Activated B cell treated with CpG ODN at 0.5 μM for 24 hours (primary cell): ENCODE measurements at regions of chr11 and their contacts with region 1.

Region 1: GRCh38 chr11:67630228-67630942 is 648 bp upstream of the NUDT8 start:
- DNase-seq: peak; percentile 92
- ATAC-seq: peak; percentile 78
- H3K4me3 Mint-ChIP-seq: peak overlapping the region; percentile 87
- H3K27ac Mint-ChIP-seq: peak overlapping the region; percentile 88
- H3K4me1 Mint-ChIP-seq: peaks cover 13% of the 10 kb centered on the region
- H3K27me3 Mint-ChIP-seq: no peaks in the 10 kb centered on the region
- CTCF ChIP-seq: no peak

Region 2: DNA sequence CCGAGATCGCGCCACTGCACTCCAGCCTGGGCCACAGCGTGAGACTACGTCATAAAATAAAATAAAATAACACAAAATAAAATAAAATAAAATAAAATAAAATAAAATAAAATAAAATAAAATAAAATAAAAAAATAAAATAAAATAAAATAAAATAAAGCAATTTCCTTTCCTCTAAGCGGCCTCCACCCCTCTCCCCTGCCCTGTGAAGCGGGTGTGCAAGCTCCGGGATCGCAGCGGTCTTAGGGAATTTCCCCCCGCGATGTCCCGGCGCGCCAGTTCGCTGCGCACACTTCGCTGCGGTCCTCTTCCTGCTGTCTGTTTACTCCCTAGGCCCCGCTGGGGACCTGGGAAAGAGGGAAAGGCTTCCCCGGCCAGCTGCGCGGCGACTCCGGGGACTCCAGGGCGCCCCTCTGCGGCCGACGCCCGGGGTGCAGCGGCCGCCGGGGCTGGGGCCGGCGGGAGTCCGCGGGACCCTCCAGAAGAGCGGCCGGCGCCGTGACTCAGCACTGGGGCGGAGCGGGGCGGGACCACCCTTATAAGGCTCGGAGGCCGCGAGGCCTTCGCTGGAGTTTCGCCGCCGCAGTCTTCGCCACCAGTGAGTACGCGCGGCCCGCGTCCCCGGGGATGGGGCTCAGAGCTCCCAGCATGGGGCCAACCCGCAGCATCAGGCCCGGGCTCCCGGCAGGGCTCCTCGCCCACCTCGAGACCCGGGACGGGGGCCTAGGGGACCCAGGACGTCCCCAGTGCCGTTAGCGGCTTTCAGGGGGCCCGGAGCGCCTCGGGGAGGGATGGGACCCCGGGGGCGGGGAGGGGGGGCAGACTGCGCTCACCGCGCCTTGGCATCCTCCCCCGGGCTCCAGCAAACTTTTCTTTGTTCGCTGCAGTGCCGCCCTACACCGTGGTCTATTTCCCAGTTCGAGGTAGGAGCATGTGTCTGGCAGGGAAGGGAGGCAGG is 46.9 kb before region 1 on chr11 and contains the start of gene GSTP1:
- CTCF ChIA-PET with region 1: interaction called, 8 read pairs
- POLR2A ChIA-PET with region 1: interaction called, 26 read pairs
- intact Hi-C with region 1: loop called (anchors 1 kb)
- DNase-seq: peak; percentile 84
- ATAC-seq: peak; percentile 76
- H3K4me3 Mint-ChIP-seq: peak within 1 kb of the TSS; percentile 89
- H3K27ac Mint-ChIP-seq: peak within 1 kb of the TSS; percentile 99
- H3K4me1 Mint-ChIP-seq: peaks cover 76% of the 10 kb centered on the region
- H3K27me3 Mint-ChIP-seq: no peaks in the 10 kb centered on the region
- CTCF ChIP-seq: no peak
- total RNA-seq, gene GSTP1: 331 and 362 TPM in 2 replicates

Region 3: GRCh38 chr11:67613960-67614715 is 16.2 kb before region 1 on chr11:
- CTCF ChIA-PET with region 1: interaction called, 28 read pairs
- POLR2A ChIA-PET with region 1: interaction called, 58 read pairs
- intact Hi-C with region 1: loop called (anchors 1 kb)
- DNase-seq: peak; percentile 81
- ATAC-seq: peak; percentile 95
- H3K4me3 Mint-ChIP-seq: peak overlapping the region; percentile 84
- H3K27ac Mint-ChIP-seq: peak overlapping the region; percentile 99
- H3K4me1 Mint-ChIP-seq: peaks cover 41% of the 10 kb centered on the region
- H3K27me3 Mint-ChIP-seq: no peaks in the 10 kb centered on the region
- CTCF ChIP-seq: no peak

Region 4: GRCh38 chr11:67648140-67649123 is 18.0 kb after region 1 on chr11:
- CTCF ChIA-PET with region 1: interaction called, 26 read pairs
- POLR2A ChIA-PET with region 1: interaction called, 43 read pairs
- intact Hi-C with region 1: loop called (anchors 1 kb)
- DNase-seq: peak; percentile 59
- ATAC-seq: peak; percentile 85
- H3K4me3 Mint-ChIP-seq: peak overlapping the region; percentile 53
- H3K27ac Mint-ChIP-seq: peak overlapping the region; percentile 50
- H3K4me1 Mint-ChIP-seq: peaks cover 67% of the 10 kb centered on the region
- H3K27me3 Mint-ChIP-seq: peaks cover 2% of the 10 kb centered on the region
- CTCF ChIP-seq: peak; percentile 82

Region 5: DNA sequence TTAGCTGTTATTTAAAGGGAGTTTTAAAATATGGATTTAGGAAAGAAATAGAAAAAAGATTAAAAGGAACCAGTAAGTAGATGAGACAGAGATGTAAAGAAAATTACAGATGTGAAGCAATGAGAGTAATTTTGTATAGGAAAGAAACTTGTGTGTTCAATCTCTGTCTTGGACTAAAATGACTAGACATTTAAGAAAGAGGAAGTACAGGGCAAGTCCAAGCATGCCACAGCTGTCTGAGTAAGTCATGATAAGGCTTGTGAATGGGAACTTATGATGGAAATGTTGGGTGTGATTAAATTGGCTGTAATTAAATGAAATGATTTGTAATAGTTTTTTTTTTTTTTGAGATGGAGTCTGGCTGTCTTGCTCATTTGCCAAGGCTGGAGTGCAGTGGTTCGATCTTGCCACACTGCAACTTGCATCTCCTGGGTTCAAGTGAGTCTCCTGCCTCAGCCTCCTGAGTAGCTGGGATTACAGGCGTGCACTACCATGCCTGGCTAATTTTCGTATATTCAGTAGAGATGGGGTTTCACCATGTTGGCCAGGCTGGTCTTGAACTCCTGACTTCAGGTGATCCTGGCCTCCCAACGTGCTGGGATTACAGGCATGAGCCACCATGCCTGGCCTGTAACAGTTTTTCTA is 26.0 kb after region 1 on chr11:
- CTCF ChIA-PET with region 1: interaction called, 43 read pairs
- POLR2A ChIA-PET with region 1: interaction called, 5 read pairs
- intact Hi-C with region 1: loop called (anchors 1 kb)
- DNase-seq: no peak
- ATAC-seq: peak; percentile 43
- H3K4me3 Mint-ChIP-seq: no peak overlapping the region
- H3K27ac Mint-ChIP-seq: no peak overlapping the region
- H3K4me1 Mint-ChIP-seq: peaks cover 8% of the 10 kb centered on the region
- H3K27me3 Mint-ChIP-seq: no peaks in the 10 kb centered on the region
- CTCF ChIP-seq: no peak

Region 6: DNA sequence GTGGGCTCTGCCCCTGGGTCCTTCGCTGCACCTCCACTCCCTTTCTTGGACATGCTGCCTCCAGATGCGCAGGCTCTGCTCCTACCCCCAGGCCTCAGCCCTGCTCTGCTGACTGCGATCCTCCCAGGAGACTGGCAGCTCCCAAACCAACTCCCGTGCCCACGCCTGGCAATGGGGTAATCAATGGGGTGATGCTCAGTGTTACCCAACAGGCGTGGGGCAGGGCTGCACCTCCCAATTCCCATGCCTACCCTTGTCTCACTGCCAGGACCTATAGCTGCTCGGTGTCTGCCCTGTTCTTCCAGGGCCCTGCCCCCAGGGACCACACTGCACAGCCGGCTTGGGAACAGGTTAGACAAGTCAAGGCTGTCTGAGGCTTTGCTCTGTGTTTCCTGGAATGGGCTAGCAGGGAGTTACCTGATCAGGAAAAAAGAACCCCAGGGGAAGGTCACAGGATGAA is 44.1 kb after region 1 on chr11 and contains the start of gene ALDH3B2:
- CTCF ChIA-PET with region 1: no interaction called
- POLR2A ChIA-PET with region 1: no interaction called
- intact Hi-C with region 1: no loop called
- DNase-seq: no peak
- ATAC-seq: no peak
- H3K4me3 Mint-ChIP-seq: no peak within 1 kb of the TSS
- H3K27ac Mint-ChIP-seq: no peak within 1 kb of the TSS
- H3K4me1 Mint-ChIP-seq: no peaks in the 10 kb centered on the region
- H3K27me3 Mint-ChIP-seq: peaks cover 22% of the 10 kb centered on the region
- CTCF ChIP-seq: no peak
- total RNA-seq, gene ALDH3B2: not detected in 2 replicates

Region 7: GRCh38 chr11:67691149-67691548 is 60.8 kb after region 1 on chr11:
- CTCF ChIA-PET with region 1: interaction called, 4 read pairs
- POLR2A ChIA-PET with region 1: no interaction called
- intact Hi-C with region 1: loop called (anchors 2 kb)
- DNase-seq: no peak
- ATAC-seq: no peak
- H3K4me3 Mint-ChIP-seq: no peak overlapping the region
- H3K27ac Mint-ChIP-seq: no peak overlapping the region
- H3K4me1 Mint-ChIP-seq: no peaks in the 10 kb centered on the region
- H3K27me3 Mint-ChIP-seq: peaks cover 8% of the 10 kb centered on the region
- CTCF ChIP-seq: no peak